ENCODE measurements at regions of chrX and their contacts with region 1.

Region 1: GRCh38 chrX:103686199-103687072 is at the start of gene MORF4L2:
- DNase-seq: peak; percentile 96
- H3K4me3 ChIP-seq: peak within 1 kb of the TSS; percentile 70
- H3K27ac ChIP-seq: peak within 1 kb of the TSS; percentile 96
- H3K4me1 ChIP-seq: peaks cover 6% of the 10 kb centered on the region
- H3K27me3 ChIP-seq: no peaks in the 10 kb centered on the region
- CTCF ChIP-seq: no peak
- total RNA-seq, gene MORF4L2: 450 and 473 TPM in 2 replicates

Region 2: DNA sequence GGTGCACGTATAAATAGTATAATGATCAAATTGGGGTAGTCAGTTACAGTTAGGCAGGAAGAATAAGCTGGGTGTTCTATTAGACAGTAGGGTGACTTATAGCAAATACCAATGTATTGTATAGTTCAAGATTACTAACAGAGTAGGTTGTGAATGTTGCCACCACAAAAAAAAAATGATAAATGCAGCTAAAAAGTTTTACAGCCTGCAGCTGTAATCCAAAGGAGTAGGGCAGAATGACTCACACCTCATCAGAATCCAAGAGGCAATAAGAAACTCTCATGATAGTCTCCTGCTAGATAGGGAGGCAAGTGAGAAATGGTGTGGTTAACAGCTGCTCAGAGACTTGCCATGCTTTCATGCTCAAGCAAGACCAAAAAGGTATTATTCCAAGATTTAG is 120.7 kb before region 1 on chrX:
- CTCF ChIA-PET with region 1: no interaction called
- POLR2A ChIA-PET with region 1: no interaction called
- intact Hi-C with region 1: no loop called
- DNase-seq: no peak
- H3K4me3 ChIP-seq: no peak overlapping the region
- H3K27ac ChIP-seq: no peak overlapping the region
- H3K4me1 ChIP-seq: no peaks in the 10 kb centered on the region
- H3K27me3 ChIP-seq: peaks cover 4% of the 10 kb centered on the region
- CTCF ChIP-seq: no peak

Region 3: GRCh38 chrX:103629318-103630170 is 56.9 kb before region 1 on chrX:
- CTCF ChIA-PET with region 1: interaction called, 5 read pairs
- POLR2A ChIA-PET with region 1: no interaction called
- intact Hi-C with region 1: loop called (anchors 5 kb)
- DNase-seq: peak; percentile 73
- H3K4me3 ChIP-seq: peak overlapping the region; percentile 71
- H3K27ac ChIP-seq: peak overlapping the region; percentile 73
- H3K4me1 ChIP-seq: no peaks in the 10 kb centered on the region
- H3K27me3 ChIP-seq: no peaks in the 10 kb centered on the region
- CTCF ChIP-seq: peak; percentile 65

Region 4: GRCh38 chrX:103756736-103757135 is 70.3 kb after region 1 on chrX:
- CTCF ChIA-PET with region 1: no interaction called
- POLR2A ChIA-PET with region 1: no interaction called
- intact Hi-C with region 1: no loop called
- DNase-seq: no peak
- H3K4me3 ChIP-seq: no peak overlapping the region
- H3K27ac ChIP-seq: no peak overlapping the region
- H3K4me1 ChIP-seq: no peaks in the 10 kb centered on the region
- H3K27me3 ChIP-seq: peaks cover 4% of the 10 kb centered on the region
- CTCF ChIP-seq: no peak

Region 5: GRCh38 chrX:103817502-103817901 is 131.1 kb after region 1 on chrX:
- CTCF ChIA-PET with region 1: no interaction called
- POLR2A ChIA-PET with region 1: no interaction called
- intact Hi-C with region 1: loop called (anchors 1 kb)
- DNase-seq: peak; percentile 67
- H3K4me3 ChIP-seq: no peak overlapping the region
- H3K27ac ChIP-seq: no peak overlapping the region
- H3K4me1 ChIP-seq: no peaks in the 10 kb centered on the region
- H3K27me3 ChIP-seq: no peaks in the 10 kb centered on the region
- CTCF ChIP-seq: peak; percentile 67

Region 6: DNA sequence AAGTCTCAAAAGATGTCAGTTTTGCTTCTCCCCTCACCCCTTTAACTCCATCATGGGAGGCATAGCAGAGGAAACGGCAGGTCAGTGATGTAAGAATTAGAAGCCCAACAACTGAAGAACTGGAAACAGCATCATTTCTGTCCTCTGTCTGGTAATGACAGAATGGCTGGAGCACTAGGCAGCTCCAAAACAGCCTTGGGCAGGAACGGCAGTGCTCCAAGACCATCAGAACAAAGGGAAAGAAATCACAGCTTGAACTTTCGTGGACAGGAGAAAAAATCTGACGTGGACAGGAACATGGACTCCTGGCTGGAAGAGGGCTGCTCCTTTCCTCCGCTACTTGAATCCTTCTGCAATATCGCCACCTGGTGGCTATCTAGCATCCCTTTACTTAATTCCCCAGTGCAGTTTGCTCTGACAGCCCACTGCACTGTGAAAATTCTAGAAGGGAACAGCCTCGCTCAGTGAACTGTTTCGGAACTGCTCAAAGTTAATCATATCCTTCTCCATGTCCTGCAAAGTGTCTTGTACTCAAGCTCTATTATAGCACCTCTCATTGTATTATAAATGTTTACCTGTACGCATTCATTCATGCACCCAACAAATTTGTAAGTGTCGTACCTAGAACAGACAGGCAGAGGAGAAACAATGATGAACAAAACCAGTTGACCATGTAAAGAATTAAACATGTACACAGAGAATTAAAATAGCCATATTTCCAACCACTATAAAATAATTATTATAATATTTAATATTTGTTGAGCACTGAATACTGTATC is 450.0 kb after region 1 on chrX:
- CTCF ChIA-PET with region 1: no interaction called
- POLR2A ChIA-PET with region 1: no interaction called
- intact Hi-C with region 1: loop called (anchors 5 kb)
- DNase-seq: peak; percentile 85
- H3K4me3 ChIP-seq: no peak overlapping the region
- H3K27ac ChIP-seq: no peak overlapping the region
- H3K4me1 ChIP-seq: no peaks in the 10 kb centered on the region
- H3K27me3 ChIP-seq: peaks cover 4% of the 10 kb centered on the region
- CTCF ChIP-seq: peak; percentile 76